ENCODE measurements at regions of chr18 and their contacts with region 1.

Region 1: GRCh38 chr18:11840493-11840892 is 10.7 kb upstream of the CHMP1B start:
- DNase-seq: no peak
- ATAC-seq: peak; percentile 68
- H3K4me3 Mint-ChIP-seq: no peak overlapping the region
- H3K27ac Mint-ChIP-seq: peak overlapping the region; percentile 2
- H3K4me1 Mint-ChIP-seq: peaks cover 7% of the 10 kb centered on the region
- H3K27me3 Mint-ChIP-seq: no peaks in the 10 kb centered on the region
- CTCF ChIP-seq: no peak

Region 2: GRCh38 chr18:11775436-11776174 is 64.9 kb before region 1 on chr18:
- CTCF ChIA-PET with region 1: no interaction called
- POLR2A ChIA-PET with region 1: no interaction called
- DNase-seq: no peak
- ATAC-seq: no peak
- H3K4me3 Mint-ChIP-seq: no peak overlapping the region
- H3K27ac Mint-ChIP-seq: peak overlapping the region; percentile 18; the same call in 1 of the 2 replicates
- H3K4me1 Mint-ChIP-seq: no peaks in the 10 kb centered on the region
- H3K27me3 Mint-ChIP-seq: no peaks in the 10 kb centered on the region
- CTCF ChIP-seq: no peak

Region 3: GRCh38 chr18:11828786-11829432 is 11.6 kb before region 1 on chr18:
- CTCF ChIA-PET with region 1: interaction called, 10 read pairs
- POLR2A ChIA-PET with region 1: interaction called, 5 read pairs
- DNase-seq: no peak
- ATAC-seq: peak; percentile 46
- H3K4me3 Mint-ChIP-seq: no peak overlapping the region
- H3K27ac Mint-ChIP-seq: peak overlapping the region; percentile 99
- H3K4me1 Mint-ChIP-seq: peaks cover 33% of the 10 kb centered on the region
- H3K27me3 Mint-ChIP-seq: no peaks in the 10 kb centered on the region
- CTCF ChIP-seq: no peak

Measured in WTC11 (cell line).